ENCODE measurements at regions of chr6 and their contacts with region 1.

Region 1: DNA sequence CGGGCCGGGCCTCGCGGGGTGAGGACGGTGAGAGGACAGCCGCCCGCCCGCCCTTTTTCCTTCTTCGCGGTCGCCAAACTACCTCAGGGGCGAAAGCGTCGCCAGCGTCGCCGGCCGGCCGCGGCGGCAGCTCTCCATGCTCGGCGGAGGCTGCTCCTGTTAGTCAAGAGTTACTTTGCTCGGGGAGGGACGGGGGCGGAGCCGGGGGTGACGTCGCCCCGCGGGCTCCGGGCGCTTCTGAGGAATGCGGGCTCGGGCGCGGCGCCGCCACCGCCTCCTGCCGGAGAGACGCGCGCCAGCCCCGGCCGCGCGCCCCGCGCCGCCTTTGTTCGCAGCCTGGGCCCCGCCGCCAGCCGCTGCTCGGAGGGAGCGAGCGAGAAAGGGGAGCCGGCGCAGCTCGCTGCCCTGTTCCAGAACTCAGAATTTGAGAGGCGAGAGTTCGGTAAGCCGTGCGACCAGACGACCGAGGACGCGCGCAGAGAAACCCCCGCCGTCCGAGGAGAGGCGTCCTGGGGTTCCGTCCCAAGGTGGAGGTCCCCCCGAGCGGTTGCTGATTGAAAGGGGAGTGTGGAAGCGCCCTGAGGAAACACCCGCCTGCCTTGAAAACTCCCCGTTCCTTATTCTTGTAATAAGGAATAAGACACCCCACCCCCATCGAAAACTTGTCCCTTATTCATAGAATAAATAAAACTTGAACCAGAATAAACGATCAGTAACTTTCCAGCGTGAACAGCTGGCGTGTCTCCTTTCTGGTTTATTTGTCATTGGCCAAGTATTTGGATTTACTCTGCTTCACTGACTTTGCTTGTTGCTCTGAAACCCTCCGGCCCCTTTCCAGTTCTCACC is at the start of gene PTPRK:
- DNase-seq: peak; percentile 94 to 98 (median 97)
- ATAC-seq: peak; percentile 97
- H3K4me3 ChIP-seq: peak within 1 kb of the TSS; percentile 68
- H3K27ac ChIP-seq: peak within 1 kb of the TSS; percentile 99
- H3K4me1 ChIP-seq: no peaks in the 10 kb centered on the region
- H3K27me3 ChIP-seq: no peaks in the 10 kb centered on the region
- total RNA-seq, gene PTPRK: 36.5 to 45.7 (median 44.0) TPM

Region 2: DNA sequence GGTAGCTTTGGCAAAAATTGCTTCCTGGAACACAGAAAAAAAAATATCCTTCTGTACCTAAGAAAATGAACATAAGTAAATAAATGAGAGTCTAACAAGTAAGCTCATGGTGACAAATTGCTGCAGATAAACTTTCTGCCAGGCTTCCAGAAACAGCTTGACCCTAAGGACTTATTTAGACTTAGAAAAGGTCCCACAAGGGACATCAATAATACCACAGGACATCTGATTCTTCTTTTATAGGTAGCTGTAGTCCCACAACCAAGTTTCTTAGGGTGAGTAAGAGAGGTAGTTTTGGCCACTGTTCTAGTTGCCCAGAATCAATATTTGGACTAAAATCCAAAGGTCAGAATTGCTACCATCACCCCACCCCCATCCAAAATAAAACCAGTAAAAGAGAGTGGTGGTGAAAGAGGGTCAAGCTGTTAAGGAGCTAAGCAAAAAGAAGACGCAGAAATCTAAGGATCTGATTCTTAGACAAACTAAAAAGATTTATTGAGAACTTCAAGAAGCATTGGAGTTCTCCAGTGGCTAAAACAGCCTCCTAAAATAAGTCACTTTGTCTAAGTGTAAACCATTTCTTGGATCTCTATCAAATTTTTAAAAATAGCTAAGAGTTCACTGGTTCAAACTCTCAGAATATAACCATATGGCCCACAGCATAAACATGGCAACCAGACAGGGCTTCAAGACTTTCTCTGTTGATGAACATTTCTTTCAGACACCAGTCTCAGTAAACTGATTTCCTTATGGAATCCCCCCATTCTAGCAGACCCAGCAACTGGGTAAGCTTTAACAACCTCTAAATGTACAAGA is 180.8 kb before region 1 on chr6:
- intact Hi-C with region 1: loop called in 1 of 4 experiments (anchors 10 kb)
- DNase-seq: no peak
- ATAC-seq: no peak
- H3K4me3 ChIP-seq: no peak overlapping the region
- H3K27ac ChIP-seq: no peak overlapping the region
- H3K4me1 ChIP-seq: no peaks in the 10 kb centered on the region
- H3K27me3 ChIP-seq: no peaks in the 10 kb centered on the region

Region 3: DNA sequence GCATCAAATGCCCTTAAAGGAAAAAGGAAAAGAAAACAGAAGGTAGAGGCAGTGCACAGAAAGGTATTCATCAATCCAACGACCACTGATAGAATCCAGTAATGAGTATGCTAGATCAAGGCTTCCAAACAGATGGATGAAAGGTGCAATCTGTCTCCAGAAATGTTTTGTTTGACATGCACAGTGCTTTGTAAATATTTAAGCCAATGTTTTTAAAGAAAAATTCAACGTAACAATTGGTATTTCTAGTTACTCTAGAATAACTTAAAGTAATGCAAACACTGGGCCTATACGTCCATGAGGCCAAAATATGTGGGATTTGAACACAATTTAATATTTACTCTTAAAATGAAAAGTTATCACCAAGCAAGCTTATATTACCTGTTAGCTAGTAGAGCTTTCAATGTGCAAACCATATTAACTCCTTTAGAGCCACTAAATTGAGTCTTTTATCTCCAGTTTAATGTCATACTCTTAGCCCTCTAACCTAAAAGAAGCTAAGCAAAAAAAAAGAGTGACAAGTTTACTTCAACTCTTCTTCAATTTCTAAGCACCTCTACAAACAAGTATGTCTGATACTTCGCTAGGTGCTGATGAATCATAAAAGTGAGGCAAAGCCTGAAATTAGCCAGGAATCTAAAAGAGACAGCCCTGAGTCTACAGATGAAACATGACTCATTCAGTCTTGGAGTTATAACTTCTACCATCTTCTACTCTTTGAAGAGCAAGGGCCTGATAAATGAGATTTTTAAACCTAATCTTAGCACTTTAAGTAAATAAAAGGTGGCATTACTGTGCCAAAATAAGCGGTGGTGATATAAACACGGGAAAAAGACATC is 170.0 kb before region 1 on chr6:
- intact Hi-C with region 1: loop called in 1 of 4 experiments (anchors 10 kb)
- DNase-seq: no peak
- ATAC-seq: no peak
- H3K4me3 ChIP-seq: no peak overlapping the region
- H3K27ac ChIP-seq: no peak overlapping the region
- H3K4me1 ChIP-seq: no peaks in the 10 kb centered on the region
- H3K27me3 ChIP-seq: no peaks in the 10 kb centered on the region

Region 4: DNA sequence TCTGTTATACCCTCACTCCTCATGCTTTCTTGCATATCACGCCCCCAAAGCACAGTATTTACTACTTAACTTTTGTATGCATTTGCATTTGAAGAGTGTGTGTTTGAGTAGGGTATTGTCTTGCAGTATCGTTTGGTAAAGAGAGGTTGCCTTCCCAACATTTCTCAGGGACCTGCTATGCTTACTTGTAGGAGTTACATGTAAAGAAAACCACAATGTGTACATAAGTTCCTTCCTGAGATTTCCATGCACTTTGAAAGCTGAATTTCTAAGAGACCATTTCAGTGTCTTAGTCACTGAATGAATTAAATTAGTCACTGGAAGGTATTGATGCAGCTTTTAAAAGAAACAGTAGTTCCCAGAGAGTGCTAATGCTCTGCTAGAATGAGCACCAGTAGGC is 203.0 kb after region 1 on chr6:
- intact Hi-C with region 1: no loop called
- DNase-seq: no peak
- ATAC-seq: no peak
- H3K4me3 ChIP-seq: no peak overlapping the region
- H3K27ac ChIP-seq: no peak overlapping the region
- H3K4me1 ChIP-seq: no peaks in the 10 kb centered on the region
- H3K27me3 ChIP-seq: no peaks in the 10 kb centered on the region

Measured in right cardiac atrium (tissue), 5 donors.